Activated CD4-positive, alpha-beta T cell treated with anti-CD3 and anti-CD28 coated beads for 36 hours (primary cell): ENCODE measurements at regions of chr16 and their contacts with region 1.

Region 1: DNA sequence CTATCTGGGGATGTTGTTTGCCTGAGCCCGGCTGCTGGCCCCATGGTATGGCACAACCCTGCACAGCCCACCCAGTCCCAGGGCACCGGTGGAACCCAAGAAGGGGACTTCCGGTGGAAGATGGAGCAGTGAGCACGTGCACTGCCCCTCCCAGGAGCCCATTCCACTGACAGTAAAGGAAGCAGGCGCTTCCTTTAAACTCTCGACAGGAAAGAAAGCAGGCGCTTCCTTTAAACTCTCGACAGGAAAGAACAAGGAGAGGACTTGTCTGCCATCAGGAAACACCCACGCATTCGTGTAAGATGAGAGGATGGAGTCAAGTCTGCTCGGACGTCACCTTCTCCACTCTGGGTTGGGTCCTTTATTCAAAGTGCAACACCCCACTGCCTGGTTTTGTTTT is 53.7 kb downstream of the IL21R start:
- DNase-seq: peak; percentile 58
- ATAC-seq: no peak
- H3K4me3 Mint-ChIP-seq: no peak overlapping the region
- H3K27ac Mint-ChIP-seq: peak overlapping the region; percentile 86
- H3K4me1 Mint-ChIP-seq: peaks cover 58% of the 10 kb centered on the region
- H3K27me3 Mint-ChIP-seq: no peaks in the 10 kb centered on the region

Region 2: DNA sequence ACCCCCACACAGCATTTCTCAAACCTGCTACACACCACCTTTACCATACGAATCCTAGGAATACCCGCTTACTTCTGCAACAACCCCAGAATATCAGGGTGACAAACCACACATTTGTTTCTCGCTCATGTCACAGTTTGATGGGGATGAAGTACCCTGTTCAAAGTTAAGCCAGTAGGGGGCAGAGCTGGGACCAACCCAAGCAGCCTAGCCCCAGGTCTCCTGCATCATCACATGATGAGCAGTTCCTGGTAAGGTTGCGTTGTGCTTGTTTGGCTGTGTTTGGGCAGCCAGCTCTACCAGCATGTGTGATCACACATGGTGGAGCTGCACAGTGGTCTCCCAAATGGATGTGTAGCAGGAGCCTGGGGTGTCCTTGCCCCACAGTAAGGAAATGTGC is 492.6 kb before region 1 on chr16:
- CTCF ChIA-PET with region 1: no interaction called
- POLR2A ChIA-PET with region 1: no interaction called
- intact Hi-C with region 1: loop called in 1 of 2 experiments (anchors 5 kb)
- DNase-seq: peak; percentile 61
- ATAC-seq: peak; percentile 74
- H3K4me3 Mint-ChIP-seq: no peak overlapping the region
- H3K27ac Mint-ChIP-seq: no peak overlapping the region
- H3K4me1 Mint-ChIP-seq: no peaks in the 10 kb centered on the region
- H3K27me3 Mint-ChIP-seq: peaks cover 9% of the 10 kb centered on the region

Region 3: DNA sequence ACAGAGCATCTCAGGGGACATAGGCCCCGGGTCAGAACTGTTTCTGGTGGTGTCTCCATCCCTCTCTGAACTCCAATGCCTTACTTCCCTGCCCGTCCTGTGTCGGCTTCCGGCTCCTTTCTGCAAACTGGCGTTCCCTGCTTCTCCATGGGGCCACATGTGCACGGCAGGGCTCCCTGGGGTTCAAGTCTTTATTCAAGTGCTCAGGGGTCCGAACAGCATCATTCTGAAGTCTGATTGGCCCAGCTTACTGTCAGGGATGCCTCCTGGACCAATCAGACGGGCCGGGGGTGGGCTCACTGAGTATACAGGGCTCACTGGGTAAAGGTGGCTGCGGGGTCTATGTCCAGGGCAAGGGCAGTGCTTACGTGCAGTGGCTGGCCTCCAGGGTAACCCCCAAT is 371.8 kb before region 1 on chr16:
- CTCF ChIA-PET with region 1: no interaction called
- POLR2A ChIA-PET with region 1: no interaction called
- intact Hi-C with region 1: loop called in 1 of 2 experiments (anchors 2 kb)
- DNase-seq: no peak
- ATAC-seq: no peak
- H3K4me3 Mint-ChIP-seq: no peak overlapping the region
- H3K27ac Mint-ChIP-seq: no peak overlapping the region
- H3K4me1 Mint-ChIP-seq: no peaks in the 10 kb centered on the region
- H3K27me3 Mint-ChIP-seq: peaks cover 14% of the 10 kb centered on the region

Region 4: GRCh38 chr16:27203429-27204231 is 252.1 kb before region 1 on chr16 and contains the start of gene KDM8:
- CTCF ChIA-PET with region 1: no interaction called
- POLR2A ChIA-PET with region 1: no interaction called
- intact Hi-C with region 1: no loop called
- DNase-seq: peak; percentile 100
- ATAC-seq: peak; percentile 90
- H3K4me3 Mint-ChIP-seq: peak within 1 kb of the TSS; percentile 89
- H3K27ac Mint-ChIP-seq: peak within 1 kb of the TSS; percentile 100
- H3K4me1 Mint-ChIP-seq: peaks cover 47% of the 10 kb centered on the region
- H3K27me3 Mint-ChIP-seq: no peaks in the 10 kb centered on the region
- total RNA-seq, gene KDM8: 9.8 to 10.4 TPM

Region 5: GRCh38 chr16:27374804-27375425 is 80.8 kb before region 1 on chr16:
- CTCF ChIA-PET with region 1: interaction called, 4 read pairs
- POLR2A ChIA-PET with region 1: no interaction called
- intact Hi-C with region 1: loop called in 1 of 2 experiments (anchors 2 kb)
- DNase-seq: peak; percentile 81
- ATAC-seq: peak; percentile 48
- H3K4me3 Mint-ChIP-seq: no peak overlapping the region
- H3K27ac Mint-ChIP-seq: no peak overlapping the region
- H3K4me1 Mint-ChIP-seq: peaks cover 50% of the 10 kb centered on the region
- H3K27me3 Mint-ChIP-seq: no peaks in the 10 kb centered on the region

Region 6: DNA sequence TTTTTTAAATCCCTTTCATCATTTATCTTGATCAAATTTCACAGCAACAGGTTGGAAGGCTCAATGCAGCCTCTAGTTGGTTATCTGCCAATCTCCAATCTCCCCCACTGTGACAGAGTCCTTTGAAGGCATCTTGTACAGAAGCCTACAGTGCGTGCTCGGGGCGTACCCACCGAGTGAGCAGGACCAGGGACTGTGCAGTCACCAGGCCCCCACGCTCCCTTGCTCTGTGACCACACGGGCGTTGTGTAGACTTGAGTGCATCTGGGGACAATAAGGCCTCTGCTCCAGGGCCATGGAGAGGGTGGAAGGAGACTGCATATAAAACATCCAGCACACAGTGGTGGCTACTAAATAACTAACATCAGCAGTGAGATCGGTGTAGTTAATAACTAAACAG is 30.6 kb after region 1 on chr16:
- CTCF ChIA-PET with region 1: no interaction called
- POLR2A ChIA-PET with region 1: no interaction called
- intact Hi-C with region 1: no loop called
- DNase-seq: no peak
- ATAC-seq: no peak
- H3K4me3 Mint-ChIP-seq: no peak overlapping the region
- H3K27ac Mint-ChIP-seq: no peak overlapping the region
- H3K4me1 Mint-ChIP-seq: no peaks in the 10 kb centered on the region
- H3K27me3 Mint-ChIP-seq: no peaks in the 10 kb centered on the region

Region 7: DNA sequence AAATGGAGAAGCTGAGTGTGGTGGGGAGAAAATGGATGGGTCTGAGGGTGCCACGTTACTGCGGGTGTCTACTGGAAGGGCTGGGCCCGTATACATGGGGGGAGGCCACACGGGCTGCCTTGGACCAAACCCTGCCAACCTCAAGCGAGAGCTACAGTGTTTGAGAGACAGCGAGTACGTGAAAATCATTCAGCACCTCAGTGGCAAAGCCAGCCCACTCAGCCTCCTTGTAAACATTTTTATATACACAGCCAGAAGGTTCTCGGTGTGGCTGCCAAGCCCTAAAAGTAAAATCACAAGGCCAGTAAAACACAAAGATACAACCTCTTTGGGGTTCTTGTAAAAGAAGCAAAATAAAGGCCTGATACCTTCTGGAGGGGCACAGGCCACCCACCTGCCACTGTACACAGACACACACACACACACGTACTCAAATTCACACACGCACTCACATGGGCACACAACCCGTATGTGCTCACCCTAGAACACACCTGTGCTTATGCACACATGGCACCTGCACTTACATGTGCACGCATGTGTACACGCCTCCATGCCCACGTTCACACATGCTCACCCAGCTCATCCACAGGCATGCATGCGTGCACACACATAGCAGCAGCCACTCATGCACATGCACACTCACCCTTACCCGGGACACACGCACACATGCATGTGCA is 505.1 kb after region 1 on chr16:
- CTCF ChIA-PET with region 1: no interaction called
- POLR2A ChIA-PET with region 1: no interaction called
- intact Hi-C with region 1: no loop called
- DNase-seq: no peak
- ATAC-seq: no peak
- H3K4me3 Mint-ChIP-seq: no peak overlapping the region
- H3K27ac Mint-ChIP-seq: no peak overlapping the region
- H3K4me1 Mint-ChIP-seq: no peaks in the 10 kb centered on the region
- H3K27me3 Mint-ChIP-seq: peaks cover 15% of the 10 kb centered on the region